AG04449 (cell line): ENCODE measurements at regions of chr19 and their contacts with region 1.

Region 1: DNA sequence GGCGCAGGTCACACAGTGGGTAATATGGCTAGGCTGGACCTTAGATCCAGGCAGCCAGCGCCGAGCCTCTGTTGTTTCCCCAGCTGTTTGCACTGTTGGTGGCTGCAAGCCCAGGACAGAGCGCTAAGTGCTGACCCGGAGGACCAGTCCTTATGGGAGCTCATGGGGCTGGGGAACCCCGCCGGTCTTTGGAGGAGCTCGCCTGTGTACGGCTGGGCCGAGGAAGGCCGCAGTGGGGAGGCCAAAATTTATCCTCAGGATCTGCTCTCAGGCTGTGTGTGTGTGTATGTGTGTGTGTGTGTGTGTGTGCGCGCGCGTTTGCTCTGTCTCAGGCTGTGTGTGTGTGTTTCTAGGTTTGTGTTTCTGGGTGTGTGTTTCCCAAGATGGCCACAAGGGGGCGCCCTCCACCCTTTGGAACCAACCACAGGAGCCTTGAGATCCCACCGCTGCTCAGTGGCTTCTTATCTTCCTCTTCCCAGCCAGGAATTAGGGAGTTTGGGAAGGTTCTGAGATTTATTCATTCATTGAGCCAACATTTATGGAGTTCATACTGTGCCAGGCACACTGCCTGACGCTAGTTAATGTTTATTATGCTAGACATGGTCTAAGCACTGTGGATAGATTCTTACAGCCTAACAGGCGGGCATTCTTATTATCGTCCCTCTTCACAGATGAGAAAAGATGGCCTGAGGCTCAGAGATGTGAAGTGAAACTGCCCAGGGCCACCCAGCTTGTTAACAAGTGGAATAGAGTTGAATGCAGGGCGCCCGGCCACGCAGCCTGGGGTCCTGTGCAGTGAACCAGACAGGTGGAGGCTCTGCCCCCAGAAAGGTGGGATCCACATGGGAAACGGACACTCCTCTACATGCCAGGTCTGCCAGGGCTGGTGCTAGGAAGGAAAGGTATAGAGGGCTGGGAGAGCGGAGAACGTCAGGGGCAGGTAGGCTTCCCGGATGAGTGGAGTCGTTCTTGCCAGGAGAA is 13.0 kb downstream of the PGLYRP1 start:
- DNase-seq: no peak
- H3K4me3 ChIP-seq: no peak overlapping the region
- CTCF ChIP-seq: peak; percentile 86

Region 2: DNA sequence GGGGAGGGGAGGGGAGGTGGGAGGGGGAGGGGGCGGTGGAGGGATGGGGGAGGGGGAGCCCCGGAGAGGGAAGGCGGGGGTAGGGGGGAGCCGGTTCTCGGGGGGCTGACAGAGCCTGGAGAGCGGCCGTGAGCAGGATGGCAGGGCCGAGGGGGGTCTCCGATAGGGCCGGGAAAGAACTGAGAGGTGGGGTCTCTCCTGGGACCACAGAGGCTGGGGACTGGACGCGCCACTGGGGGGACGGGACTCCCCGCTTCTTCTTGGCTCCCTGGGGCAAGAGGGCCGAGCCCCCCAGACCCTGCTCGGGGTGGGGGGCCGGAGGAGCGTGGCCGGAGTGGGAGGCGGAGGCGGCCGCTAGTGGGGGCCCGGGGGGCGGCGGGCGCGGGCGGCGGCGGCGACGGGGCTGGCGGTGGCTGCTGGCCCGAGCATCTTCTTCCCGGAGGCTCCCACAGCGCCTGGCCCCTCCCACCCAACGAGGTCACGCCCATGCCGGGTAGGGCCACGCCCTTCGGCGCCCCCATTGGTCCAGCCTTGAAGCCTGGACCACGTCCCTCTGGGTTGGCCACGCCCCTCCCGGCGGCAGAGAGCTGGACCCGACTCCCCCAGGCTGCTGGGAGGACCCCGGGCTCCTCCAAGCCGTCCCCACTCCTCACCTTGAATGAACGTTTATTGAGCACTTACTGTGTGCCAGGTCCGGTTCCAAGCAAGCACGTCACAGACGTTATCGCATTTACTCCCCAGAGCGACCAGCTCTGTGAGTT is 36.1 kb before region 1 on chr19 and contains the start of gene NOVA2:
- CTCF ChIA-PET with region 1: no interaction called
- POLR2A ChIA-PET with region 1: no interaction called
- DNase-seq: no peak
- H3K4me3 ChIP-seq: peak within 1 kb of the TSS; percentile 18
- CTCF ChIP-seq: no peak

Region 3: GRCh38 chr19:45994989-45995714 is 14.7 kb before region 1 on chr19 and contains the start of gene CCDC61:
- CTCF ChIA-PET with region 1: interaction called, 32 read pairs
- POLR2A ChIA-PET with region 1: no interaction called
- DNase-seq: peak; percentile 97
- H3K4me3 ChIP-seq: peak within 1 kb of the TSS; percentile 89
- CTCF ChIP-seq: no peak